ENCODE measurements at regions of chr18 and their contacts with region 1.

Region 1: DNA sequence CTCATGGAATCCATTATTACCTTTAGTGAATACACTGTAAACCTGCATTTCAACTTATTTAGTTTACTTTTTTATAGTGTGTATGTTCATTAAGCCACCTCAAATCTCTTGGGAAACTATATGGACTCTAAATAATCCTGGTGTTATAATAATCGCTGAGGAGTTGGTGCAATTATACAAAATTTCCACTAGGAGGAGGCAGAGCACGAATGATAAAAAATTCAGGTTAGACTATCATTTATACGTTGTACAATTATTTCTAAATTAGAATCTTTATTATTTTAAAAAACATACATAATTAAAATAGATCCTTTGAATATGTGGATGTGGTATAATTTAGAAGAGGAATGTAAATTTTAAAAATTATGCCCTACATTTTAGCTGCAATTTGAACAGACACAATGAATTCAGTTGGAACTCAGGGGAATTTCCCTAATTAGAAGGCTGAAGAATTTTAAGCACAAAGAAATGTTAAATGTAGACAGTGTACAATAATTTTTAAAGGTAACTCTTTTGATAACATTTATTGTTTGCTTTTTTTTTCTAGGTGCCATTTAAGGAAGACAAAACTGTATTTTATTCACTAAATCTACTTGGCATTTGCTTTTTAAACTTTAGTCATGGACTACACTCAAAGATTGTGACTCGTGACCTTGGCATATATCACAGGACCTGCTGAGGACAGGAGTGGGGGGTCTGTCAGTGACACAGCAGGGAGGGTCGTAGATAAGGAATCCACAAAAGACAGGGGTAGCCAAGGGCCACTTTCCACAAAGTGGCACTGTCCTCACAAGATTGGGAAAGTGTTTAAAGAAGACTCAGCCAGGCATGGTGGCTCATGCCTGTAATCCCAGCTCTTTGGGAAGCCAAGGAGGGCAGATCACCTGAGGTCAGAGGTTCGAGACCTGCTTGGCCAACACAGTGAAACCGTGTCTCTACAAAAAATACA is 45.5 kb downstream of the RAB12 start:
- DNase-seq: peak; percentile 65
- H3K27ac ChIP-seq: no peak overlapping the region
- CTCF ChIP-seq: peak; percentile 85

Region 2: DNA sequence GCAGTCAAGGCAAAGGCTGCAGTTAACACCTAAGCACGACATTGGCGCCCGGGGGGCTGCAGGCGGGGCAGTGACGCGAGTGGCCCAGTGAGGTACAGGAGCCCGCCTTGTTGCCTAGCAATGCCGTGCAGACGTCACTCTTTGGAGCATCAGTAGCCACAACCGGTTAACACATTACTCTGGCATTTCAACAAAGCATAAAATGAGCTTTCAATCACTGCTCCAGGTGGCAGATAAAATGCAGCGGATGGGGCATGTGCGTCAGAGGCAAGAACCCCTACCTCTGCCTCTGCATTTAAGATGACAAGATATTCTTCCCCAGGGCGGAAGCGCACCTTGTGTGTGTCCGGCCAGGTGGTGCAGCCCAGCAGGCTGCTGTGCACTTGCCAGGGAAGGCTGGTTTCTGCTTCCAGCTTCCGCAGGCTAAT is 190.0 kb after region 1 on chr18:
- CTCF ChIA-PET with region 1: no interaction called
- POLR2A ChIA-PET with region 1: no interaction called
- DNase-seq: peak; percentile 19
- H3K27ac ChIP-seq: no peak overlapping the region
- CTCF ChIP-seq: no peak

Region 3: DNA sequence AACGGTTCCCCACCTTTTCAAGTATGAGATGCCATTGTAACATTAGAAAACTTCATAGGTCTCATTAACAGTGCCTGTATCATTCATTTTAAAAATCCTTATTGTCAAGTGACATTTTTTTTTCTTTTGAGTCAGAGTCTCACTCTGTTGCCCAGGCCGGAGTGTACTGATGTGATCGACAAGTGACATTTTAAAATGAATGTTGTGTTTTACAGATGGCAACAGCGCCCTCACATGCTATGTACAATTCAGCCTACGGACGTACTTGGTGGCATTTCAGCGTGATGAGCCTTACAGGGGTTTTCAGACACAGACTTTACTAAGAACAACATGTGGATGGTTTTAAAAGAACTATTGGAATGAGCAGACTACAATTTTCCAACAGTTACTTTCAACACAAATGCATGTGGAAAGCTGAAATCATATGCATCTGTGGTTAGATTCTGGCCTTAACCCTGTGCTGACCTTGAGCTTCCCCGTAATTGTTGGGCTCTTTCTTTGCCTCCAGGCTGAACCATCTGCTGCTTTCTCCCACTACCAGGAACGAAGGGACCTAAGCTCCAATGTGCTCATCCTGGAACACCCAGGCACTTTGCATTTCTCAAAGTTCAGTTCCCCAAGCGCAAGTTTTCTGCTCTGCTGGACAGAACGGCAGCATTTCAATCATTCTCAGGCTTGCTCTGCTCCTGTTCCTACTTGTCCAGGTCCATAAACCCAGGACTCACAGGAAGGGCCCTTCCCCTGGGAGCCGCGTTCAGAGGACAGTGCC is 327.8 kb after region 1 on chr18:
- CTCF ChIA-PET with region 1: interaction called, 13 read pairs
- POLR2A ChIA-PET with region 1: no interaction called
- DNase-seq: peak; percentile 45
- H3K27ac ChIP-seq: peak overlapping the region; percentile 86
- CTCF ChIP-seq: peak; percentile 29; the same call in 1 of the 2 replicates